Activated naive CD4-positive, alpha-beta T cell treated with anti-CD3 and anti-CD28 coated beads for 36 hours (primary cell): ENCODE measurements at regions of chr3 and their contacts with region 1.

Region 1: GRCh38 chr3:143972505-143973255 is 1.1 kb downstream of the DIPK2A start:
- DNase-seq: peak; percentile 54
- H3K4me3 Mint-ChIP-seq: peak overlapping the region; percentile 94
- H3K27ac Mint-ChIP-seq: peak overlapping the region; percentile 92
- H3K4me1 Mint-ChIP-seq: peaks cover 24% of the 10 kb centered on the region
- H3K27me3 Mint-ChIP-seq: peaks cover 3% of the 10 kb centered on the region

Region 2: GRCh38 chr3:142148792-142149672 is 1823.6 kb before region 1 on chr3 and contains the start of gene TFDP2:
- CTCF ChIA-PET with region 1: no interaction called
- intact Hi-C with region 1: loop called (anchors 10 kb)
- DNase-seq: peak; percentile 89
- H3K4me3 Mint-ChIP-seq: peak within 1 kb of the TSS; percentile 84
- H3K27ac Mint-ChIP-seq: no peak within 1 kb of the TSS
- H3K4me1 Mint-ChIP-seq: peaks cover 24% of the 10 kb centered on the region
- H3K27me3 Mint-ChIP-seq: no peaks in the 10 kb centered on the region
- total RNA-seq, gene TFDP2: 23.0 to 25.0 TPM

Region 3: DNA sequence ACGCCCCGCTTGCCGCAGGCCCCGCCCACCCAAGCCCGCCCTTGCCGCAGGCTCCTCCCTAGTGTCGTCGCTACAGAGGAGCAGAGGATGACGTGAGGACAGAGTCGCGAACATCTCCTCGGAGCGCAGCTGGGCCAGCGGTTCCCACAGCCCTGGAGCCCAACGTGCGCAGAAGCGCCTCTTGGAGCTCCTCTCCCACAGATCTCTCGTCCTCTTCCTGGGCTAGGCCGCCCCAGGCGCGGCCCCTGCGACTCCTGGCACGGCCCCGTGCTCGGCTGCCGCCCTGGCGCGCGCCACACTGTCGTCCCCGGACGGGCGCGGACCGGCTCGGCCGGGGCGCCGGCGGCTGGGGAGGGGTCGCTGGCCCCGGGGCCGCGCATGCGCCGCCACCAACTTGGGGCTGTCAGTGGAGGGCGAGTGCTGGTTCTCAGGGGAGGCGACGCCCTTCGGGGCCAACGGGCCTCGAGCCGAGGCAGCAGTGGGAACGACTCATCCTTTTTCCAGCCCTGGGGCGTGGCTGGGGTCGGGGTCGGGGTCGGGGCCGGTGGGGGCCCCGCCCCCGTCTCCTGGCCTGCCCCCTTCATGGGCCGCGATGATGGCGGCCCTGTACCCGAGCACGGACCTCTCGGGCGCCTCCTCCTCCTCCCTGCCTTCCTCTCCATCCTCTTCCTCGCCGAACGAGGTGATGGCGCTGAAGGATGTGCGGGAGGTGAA is 1248.6 kb before region 1 on chr3 and contains the start of gene TRPC1:
- CTCF ChIA-PET with region 1: no interaction called
- intact Hi-C with region 1: loop called (anchors 2 kb)
- DNase-seq: peak; percentile 57
- H3K4me3 Mint-ChIP-seq: peak within 1 kb of the TSS; percentile 83
- H3K27ac Mint-ChIP-seq: peak within 1 kb of the TSS; percentile 82
- H3K4me1 Mint-ChIP-seq: peaks cover 10% of the 10 kb centered on the region
- H3K27me3 Mint-ChIP-seq: peaks cover 20% of the 10 kb centered on the region
- total RNA-seq, gene TRPC1: 3.1 to 4.8 TPM

Region 4: GRCh38 chr3:143171141-143171970 is 801.3 kb before region 1 on chr3:
- CTCF ChIA-PET with region 1: no interaction called
- intact Hi-C with region 1: loop called (anchors 1 kb)
- DNase-seq: peak; percentile 26
- H3K4me3 Mint-ChIP-seq: peak overlapping the region; percentile 7
- H3K27ac Mint-ChIP-seq: peak overlapping the region; percentile 82
- H3K4me1 Mint-ChIP-seq: peaks cover 67% of the 10 kb centered on the region
- H3K27me3 Mint-ChIP-seq: no peaks in the 10 kb centered on the region

Region 5: DNA sequence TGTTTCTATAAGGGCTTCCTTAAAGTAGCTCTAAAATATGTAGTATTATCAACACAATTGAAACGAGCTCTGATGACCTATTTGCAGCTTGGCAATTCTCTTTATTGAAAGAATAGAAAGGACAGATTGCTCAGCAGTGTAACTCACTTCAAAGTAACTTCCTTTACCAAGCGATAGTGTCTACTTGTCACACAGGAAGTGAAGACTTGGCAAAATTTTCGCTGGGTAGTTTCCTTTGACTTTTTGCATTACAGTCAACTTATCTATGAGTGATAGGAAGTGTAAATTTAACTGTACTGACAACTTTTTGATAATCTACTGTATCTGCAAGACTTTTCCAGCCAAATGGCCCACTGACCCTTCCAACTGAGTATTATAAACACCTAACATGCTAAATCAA is 147.2 kb before region 1 on chr3:
- CTCF ChIA-PET with region 1: interaction called, 6 read pairs
- intact Hi-C with region 1: loop called (anchors 1 kb)
- DNase-seq: peak; percentile 39
- H3K4me3 Mint-ChIP-seq: no peak overlapping the region
- H3K27ac Mint-ChIP-seq: no peak overlapping the region
- H3K4me1 Mint-ChIP-seq: peaks cover 27% of the 10 kb centered on the region
- H3K27me3 Mint-ChIP-seq: no peaks in the 10 kb centered on the region

Region 6: GRCh38 chr3:143885780-143886427 is 86.8 kb before region 1 on chr3:
- CTCF ChIA-PET with region 1: interaction called, 6 read pairs
- intact Hi-C with region 1: loop called (anchors 1 kb)
- DNase-seq: peak; percentile 45
- H3K4me3 Mint-ChIP-seq: no peak overlapping the region
- H3K27ac Mint-ChIP-seq: no peak overlapping the region
- H3K4me1 Mint-ChIP-seq: no peaks in the 10 kb centered on the region
- H3K27me3 Mint-ChIP-seq: no peaks in the 10 kb centered on the region

Region 7: DNA sequence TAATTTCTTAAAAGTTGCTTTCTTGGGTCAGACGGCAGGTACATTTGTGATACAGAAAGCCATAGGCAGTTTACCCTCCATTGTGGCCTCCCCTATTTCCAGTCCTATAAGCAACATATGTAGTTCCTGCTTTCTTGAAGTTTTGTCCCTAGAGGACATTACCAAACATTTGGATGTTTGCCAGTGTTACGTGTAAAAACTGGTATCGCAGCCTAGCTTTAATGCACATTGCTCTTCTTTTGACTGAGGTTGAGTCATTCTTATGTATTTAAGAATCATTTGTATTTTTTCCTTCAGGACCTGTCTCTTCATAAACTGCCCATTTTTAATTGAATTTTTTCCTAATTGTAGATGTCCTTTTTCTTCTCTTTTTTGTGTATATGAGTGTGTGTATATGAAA is 113.3 kb after region 1 on chr3:
- CTCF ChIA-PET with region 1: no interaction called
- intact Hi-C with region 1: no loop called
- DNase-seq: no peak
- H3K4me3 Mint-ChIP-seq: no peak overlapping the region
- H3K27ac Mint-ChIP-seq: no peak overlapping the region
- H3K4me1 Mint-ChIP-seq: no peaks in the 10 kb centered on the region
- H3K27me3 Mint-ChIP-seq: peaks cover 11% of the 10 kb centered on the region

Region 8: GRCh38 chr3:144770915-144771351 is 798.3 kb after region 1 on chr3:
- CTCF ChIA-PET with region 1: no interaction called
- intact Hi-C with region 1: loop called (anchors 2 kb)
- DNase-seq: no peak
- H3K4me3 Mint-ChIP-seq: no peak overlapping the region
- H3K27ac Mint-ChIP-seq: no peak overlapping the region
- H3K4me1 Mint-ChIP-seq: no peaks in the 10 kb centered on the region
- H3K27me3 Mint-ChIP-seq: no peaks in the 10 kb centered on the region